Gastrocnemius medialis (tissue), 4 donors: ENCODE measurements at regions of chr19 and their contacts with region 1.

Region 1: DNA sequence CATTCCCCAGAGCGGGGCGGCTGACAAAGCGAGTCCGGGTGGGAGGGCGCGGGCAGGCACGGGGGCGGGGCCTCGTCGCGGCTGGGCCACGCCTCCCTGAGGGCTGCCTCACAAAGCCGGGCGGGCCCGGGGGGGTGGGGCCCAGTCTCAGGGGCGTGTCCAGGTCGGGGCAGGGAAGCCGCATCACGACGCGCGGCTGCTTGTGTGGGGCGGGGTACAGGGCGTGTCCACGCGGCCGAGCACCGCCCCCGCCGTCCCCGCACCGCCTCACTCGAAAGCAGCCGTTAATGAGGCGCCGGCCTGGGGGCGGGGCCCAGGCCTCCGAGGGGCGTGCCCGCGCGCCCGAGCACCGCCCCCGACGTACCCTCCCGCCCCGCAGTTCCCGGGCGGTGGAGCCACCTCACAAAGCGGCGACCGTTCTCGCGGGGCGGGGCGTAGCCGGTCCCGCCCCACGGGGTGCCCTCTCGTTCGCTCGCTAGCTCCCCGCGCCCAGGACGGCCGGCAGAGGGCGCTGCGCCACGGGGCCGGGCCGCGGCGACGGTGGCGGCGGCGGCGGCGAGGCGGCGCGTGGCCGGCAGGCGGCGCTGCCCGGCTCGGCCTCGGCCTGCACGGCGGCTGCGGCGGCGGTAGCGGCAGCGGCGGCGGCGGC is at the start of gene CARM1:
- DNase-seq: peak; percentile 96 to 99
- ATAC-seq: peak; percentile 80 to 81
- H3K4me3 ChIP-seq: peak within 1 kb of the TSS; percentile 66 to 86 (median 78)
- H3K27ac ChIP-seq: peak within 1 kb of the TSS; percentile 89 to 98 (median 94)
- H3K4me1 ChIP-seq: peaks cover 19 to 23% of the 10 kb centered on the region in 2 donors
- H3K27me3 ChIP-seq: no peaks in the 10 kb centered on the region
- CTCF ChIP-seq: peak in 4 of 5 experiments; percentile 84 to 95 (median 94)
- POLR2A ChIP-seq: no peak
- total RNA-seq, gene CARM1: 31.2 to 58.5 (median 53.0) TPM

Region 2: GRCh38 chr19:10565567-10566407 is 305.3 kb before region 1 on chr19 and contains the start of gene KRI1:
- in situ Hi-C with region 1: no loop called
- intact Hi-C with region 1: loop called (anchors 5 kb)
- DNase-seq: peak; percentile 97
- ATAC-seq: peak; percentile 77 to 80
- H3K4me3 ChIP-seq: peak within 1 kb of the TSS; percentile 68 to 94 (median 86)
- H3K27ac ChIP-seq: peak within 1 kb of the TSS; percentile 84 to 92 (median 92)
- H3K4me1 ChIP-seq: peaks cover 34 to 35% of the 10 kb centered on the region in 2 donors
- H3K27me3 ChIP-seq: no peaks in the 10 kb centered on the region
- CTCF ChIP-seq: peak; percentile 34 to 75 (median 55)
- POLR2A ChIP-seq: peak; percentile 80 to 94
- total RNA-seq, gene KRI1: 16.8 to 24.1 (median 19.9) TPM

Region 3: GRCh38 chr19:10769533-10770491 is 101.3 kb before region 1 on chr19:
- in situ Hi-C with region 1: loop called in 2 of 4 experiments (anchors 5 to 10 kb)
- intact Hi-C with region 1: no loop called
- DNase-seq: peak; percentile 69 to 80
- ATAC-seq: peak; percentile 94 to 96
- H3K4me3 ChIP-seq: peak overlapping the region in 1 of 4 donors; percentile 23
- H3K27ac ChIP-seq: peak overlapping the region; percentile 75 to 85 (median 82)
- H3K4me1 ChIP-seq: peaks cover 43 to 50% of the 10 kb centered on the region in 2 donors
- H3K27me3 ChIP-seq: no peaks in the 10 kb centered on the region
- CTCF ChIP-seq: peak in 4 of 5 experiments; percentile 35 to 61 (median 36)
- POLR2A ChIP-seq: no peak

Region 4: GRCh38 chr19:10911579-10912363 is 40.7 kb after region 1 on chr19:
- in situ Hi-C with region 1: no loop called
- intact Hi-C with region 1: loop called (anchors 5 kb)
- DNase-seq: peak in 1 of 2 donors; percentile 62
- ATAC-seq: peak; percentile 50 to 77
- H3K4me3 ChIP-seq: no peak overlapping the region
- H3K27ac ChIP-seq: peak overlapping the region; percentile 78 to 90 (median 82)
- H3K4me1 ChIP-seq: peaks cover 21 to 22% of the 10 kb centered on the region in 2 donors
- H3K27me3 ChIP-seq: no peaks in the 10 kb centered on the region
- CTCF ChIP-seq: no peak
- POLR2A ChIP-seq: no peak

Region 5: GRCh38 chr19:10936661-10937084 is 65.6 kb after region 1 on chr19:
- in situ Hi-C with region 1: loop called in 1 of 4 experiments (anchors 10 kb)
- intact Hi-C with region 1: loop called (anchors 2 kb)
- DNase-seq: no peak
- ATAC-seq: peak; percentile 88 to 92
- H3K4me3 ChIP-seq: no peak overlapping the region
- H3K27ac ChIP-seq: no peak overlapping the region
- H3K4me1 ChIP-seq: peaks cover 0 to 6% of the 10 kb centered on the region in 2 donors
- H3K27me3 ChIP-seq: no peaks in the 10 kb centered on the region
- CTCF ChIP-seq: peak; percentile 42 to 65 (median 60)
- POLR2A ChIP-seq: no peak

Region 6: GRCh38 chr19:10979951-10980381 is 108.9 kb after region 1 on chr19:
- in situ Hi-C with region 1: no loop called
- intact Hi-C with region 1: no loop called
- DNase-seq: no peak
- ATAC-seq: no peak
- H3K4me3 ChIP-seq: no peak overlapping the region
- H3K27ac ChIP-seq: no peak overlapping the region
- H3K4me1 ChIP-seq: peaks cover 21 to 22% of the 10 kb centered on the region in 2 donors
- H3K27me3 ChIP-seq: no peaks in the 10 kb centered on the region
- CTCF ChIP-seq: no peak
- POLR2A ChIP-seq: no peak